BJ (cell line): ENCODE measurements at regions of chr3 and their contacts with region 1.

Region 1: GRCh38 chr3:21894459-21895340 is 143.7 kb upstream of the ZNF385D start:
- DNase-seq: no peak
- H3K4me3 ChIP-seq: no peak overlapping the region
- H3K27me3 ChIP-seq: no peaks in the 10 kb centered on the region; the same call in 1 of the 2 replicates
- CTCF ChIP-seq: peak; percentile 58

Region 2: GRCh38 chr3:20340324-20340928 is 1554.3 kb before region 1 on chr3:
- CTCF ChIA-PET with region 1: interaction called, 22 read pairs
- POLR2A ChIA-PET with region 1: no interaction called
- DNase-seq: no peak
- H3K4me3 ChIP-seq: no peak overlapping the region
- H3K27me3 ChIP-seq: no peaks in the 10 kb centered on the region
- CTCF ChIP-seq: peak; percentile 93

Region 3: DNA sequence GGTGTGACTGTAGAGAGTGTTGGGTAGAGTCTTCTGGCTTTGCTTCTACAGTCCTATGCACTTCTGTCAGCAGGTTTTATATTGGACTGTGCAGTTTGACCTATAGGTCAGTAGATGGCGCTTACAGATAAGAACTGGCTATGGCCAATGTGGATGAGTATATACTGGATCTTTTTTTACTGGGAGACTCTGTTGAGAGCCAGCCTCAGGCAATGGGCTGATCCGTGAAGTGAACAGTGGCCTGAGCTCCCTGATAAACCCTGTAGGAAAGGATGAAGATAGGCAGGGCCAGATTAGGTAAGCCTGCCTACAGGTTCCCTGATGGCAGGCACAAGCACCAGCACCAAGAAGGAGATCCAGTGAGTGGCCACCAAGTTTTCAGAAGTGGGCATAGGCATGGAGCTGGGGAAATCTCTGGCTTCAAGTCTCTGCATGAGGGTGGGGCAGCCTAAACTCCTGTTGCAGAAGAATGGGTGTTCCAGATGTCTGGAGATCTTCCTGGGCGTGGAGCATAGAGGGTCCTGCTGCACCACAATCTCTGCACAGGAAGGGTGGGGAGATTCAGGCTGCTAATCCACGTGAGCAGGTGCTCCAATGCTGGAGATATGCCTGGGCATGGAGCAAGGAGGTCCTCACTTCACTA is 1382.7 kb before region 1 on chr3:
- CTCF ChIA-PET with region 1: interaction called, 11 read pairs
- POLR2A ChIA-PET with region 1: no interaction called
- DNase-seq: peak; percentile 26
- H3K4me3 ChIP-seq: no peak overlapping the region
- H3K27me3 ChIP-seq: no peaks in the 10 kb centered on the region
- CTCF ChIP-seq: peak; percentile 63

Region 4: DNA sequence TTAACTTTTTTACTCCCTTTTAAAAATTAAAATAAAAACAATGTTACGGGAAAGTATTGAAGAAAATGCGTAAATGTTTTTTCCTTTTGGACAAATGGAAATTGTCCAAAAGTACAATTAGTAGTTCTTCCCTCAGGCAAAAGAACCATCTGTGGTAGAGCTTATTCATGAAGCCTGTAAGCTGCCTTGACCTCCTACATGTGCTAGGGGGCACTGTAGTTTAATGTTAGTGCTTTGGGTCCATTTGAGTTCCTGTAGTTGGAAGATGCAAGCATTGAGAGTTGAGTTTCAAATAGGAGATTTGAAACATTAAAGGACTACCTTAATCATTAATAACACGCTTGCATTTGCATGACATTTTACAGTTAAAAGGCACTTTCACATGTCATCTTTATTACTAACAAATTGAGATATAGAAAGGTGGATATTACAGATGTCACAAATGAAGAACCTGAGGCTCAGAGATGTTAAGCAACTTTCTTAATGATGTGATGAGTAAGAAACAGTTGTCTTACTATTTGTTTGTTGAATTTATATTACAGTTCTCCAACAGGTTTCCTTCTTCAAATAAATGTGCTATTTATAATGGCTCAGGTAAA is 141.9 kb before region 1 on chr3:
- CTCF ChIA-PET with region 1: interaction called, 15 read pairs
- POLR2A ChIA-PET with region 1: no interaction called
- DNase-seq: peak; percentile 39
- H3K4me3 ChIP-seq: no peak overlapping the region
- H3K27me3 ChIP-seq: no peaks in the 10 kb centered on the region
- CTCF ChIP-seq: peak; percentile 67

Region 5: DNA sequence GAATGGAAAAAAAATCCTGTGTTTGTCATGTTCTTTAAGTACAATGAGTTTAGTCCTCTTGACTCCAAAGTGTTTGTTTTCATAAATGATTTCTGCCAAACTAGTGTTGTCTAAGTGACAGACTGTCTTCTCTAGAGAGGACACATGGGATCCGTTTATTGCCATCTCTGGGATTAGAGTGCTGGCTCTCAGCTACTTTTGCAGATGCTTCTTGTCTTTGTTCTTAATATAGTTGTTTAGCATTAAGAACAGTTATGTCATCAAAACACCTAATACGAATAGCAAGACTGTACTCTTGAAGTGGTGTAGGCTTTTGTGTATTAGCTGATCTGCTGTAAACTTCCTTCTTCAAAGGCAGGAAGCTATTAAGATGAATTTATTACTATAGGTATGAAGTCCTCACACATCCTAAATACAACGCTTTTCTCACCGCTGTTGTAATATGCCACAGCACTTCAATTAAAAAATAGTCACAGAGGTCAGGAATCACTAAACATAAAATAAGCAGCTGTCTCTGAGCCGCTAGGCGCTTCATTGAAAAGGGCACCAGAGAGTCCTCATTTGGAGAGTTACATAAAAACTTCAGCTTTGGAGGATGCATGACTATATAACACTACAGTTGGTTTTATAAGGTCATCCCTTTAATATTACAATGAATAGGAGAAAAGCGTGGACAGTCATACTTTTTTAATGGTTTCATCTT is 15.4 kb before region 1 on chr3:
- CTCF ChIA-PET with region 1: interaction called, 14 read pairs
- POLR2A ChIA-PET with region 1: no interaction called
- DNase-seq: no peak
- H3K4me3 ChIP-seq: no peak overlapping the region
- H3K27me3 ChIP-seq: no peaks in the 10 kb centered on the region
- CTCF ChIP-seq: no peak

Region 6: GRCh38 chr3:23575697-23576096 is 1681.0 kb after region 1 on chr3:
- CTCF ChIA-PET with region 1: no interaction called
- POLR2A ChIA-PET with region 1: no interaction called
- DNase-seq: no peak
- H3K4me3 ChIP-seq: no peak overlapping the region
- H3K27me3 ChIP-seq: no peaks in the 10 kb centered on the region
- CTCF ChIP-seq: no peak